MCF 10A (cell line): ENCODE measurements at regions of chr6 and their contacts with region 1.

Region 1: GRCh38 chr6:148192310-148192709 is 150.3 kb upstream of the SASH1 start:
- DNase-seq: peak; percentile 52
- H3K4me3 Mint-ChIP-seq: peak overlapping the region; percentile 60
- H3K27ac Mint-ChIP-seq: peak overlapping the region; percentile 92
- H3K4me1 Mint-ChIP-seq: peaks cover 34% of the 10 kb centered on the region
- H3K27me3 Mint-ChIP-seq: no peaks in the 10 kb centered on the region
- CTCF ChIP-seq: no peak

Region 2: DNA sequence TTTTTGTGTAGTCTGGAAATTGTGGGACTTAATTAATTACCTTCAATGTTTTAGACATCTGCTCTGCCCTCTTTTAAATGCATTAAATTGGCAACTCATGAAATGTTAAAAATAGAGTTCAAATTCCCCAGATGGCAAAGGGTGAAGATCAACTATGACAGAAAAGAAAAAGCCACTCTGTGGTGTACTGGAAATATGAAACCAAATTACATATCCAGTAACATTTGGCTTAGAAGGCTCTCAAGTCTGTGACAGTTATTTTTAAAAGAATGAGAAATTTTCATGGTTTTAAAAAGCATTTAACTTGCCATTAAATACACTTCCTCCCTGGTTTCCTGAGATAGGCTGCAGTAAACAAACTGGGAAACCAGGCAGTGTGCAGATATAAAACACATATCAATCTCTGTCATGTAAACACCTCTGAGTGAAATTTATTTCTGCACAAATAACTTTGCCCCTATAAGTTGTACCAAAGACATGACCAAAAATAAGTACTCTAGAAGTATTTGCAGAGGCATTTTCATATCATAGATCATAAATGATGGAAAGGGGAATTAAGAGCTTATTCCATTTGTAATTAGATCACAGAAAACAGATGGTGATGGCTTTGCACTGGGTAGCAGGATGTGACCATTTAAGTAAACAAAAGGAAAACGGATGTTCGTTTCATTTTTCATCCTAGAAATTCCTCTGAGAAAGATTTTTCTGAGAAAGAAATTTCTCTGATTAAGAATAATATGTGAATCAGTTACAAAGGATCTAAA is 323.7 kb before region 1 on chr6:
- CTCF ChIA-PET with region 1: no interaction called
- POLR2A ChIA-PET with region 1: no interaction called
- intact Hi-C with region 1: no loop called
- DNase-seq: no peak
- H3K4me3 Mint-ChIP-seq: no peak overlapping the region
- H3K27ac Mint-ChIP-seq: no peak overlapping the region
- H3K4me1 Mint-ChIP-seq: no peaks in the 10 kb centered on the region
- H3K27me3 Mint-ChIP-seq: no peaks in the 10 kb centered on the region
- CTCF ChIP-seq: no peak

Region 3: DNA sequence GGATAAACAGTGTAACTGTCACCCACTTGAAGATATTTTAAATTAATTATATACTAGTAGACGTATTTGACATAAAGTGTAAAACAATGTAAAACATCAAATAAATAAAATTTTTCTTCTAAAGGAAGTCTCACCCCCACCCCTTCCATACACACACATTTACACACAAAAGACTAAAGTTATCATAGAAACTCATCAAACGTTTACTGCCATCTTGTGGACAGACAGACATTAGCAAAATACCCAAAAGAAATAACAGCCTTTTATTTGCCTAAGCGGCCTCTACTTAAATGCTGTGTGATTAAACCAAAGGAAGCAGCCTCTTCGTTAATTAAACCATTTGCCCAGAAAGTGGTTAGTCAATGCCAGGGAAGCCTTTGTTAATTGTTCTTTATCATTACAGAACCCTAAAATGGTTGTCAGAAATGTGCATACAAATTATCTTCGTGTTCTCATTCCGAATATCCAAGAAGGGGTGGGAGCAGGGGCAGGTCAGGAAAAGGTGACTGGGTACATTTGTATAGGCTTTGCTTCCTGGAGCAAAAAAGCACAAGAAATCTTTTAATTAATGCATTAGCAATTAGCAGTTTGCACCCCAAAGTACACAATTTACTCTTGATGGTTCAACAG is 25.9 kb before region 1 on chr6:
- CTCF ChIA-PET with region 1: no interaction called
- POLR2A ChIA-PET with region 1: no interaction called
- intact Hi-C with region 1: no loop called
- DNase-seq: peak; percentile 71
- H3K4me3 Mint-ChIP-seq: no peak overlapping the region
- H3K27ac Mint-ChIP-seq: no peak overlapping the region
- H3K4me1 Mint-ChIP-seq: no peaks in the 10 kb centered on the region
- H3K27me3 Mint-ChIP-seq: no peaks in the 10 kb centered on the region
- CTCF ChIP-seq: peak; percentile 63

Region 4: DNA sequence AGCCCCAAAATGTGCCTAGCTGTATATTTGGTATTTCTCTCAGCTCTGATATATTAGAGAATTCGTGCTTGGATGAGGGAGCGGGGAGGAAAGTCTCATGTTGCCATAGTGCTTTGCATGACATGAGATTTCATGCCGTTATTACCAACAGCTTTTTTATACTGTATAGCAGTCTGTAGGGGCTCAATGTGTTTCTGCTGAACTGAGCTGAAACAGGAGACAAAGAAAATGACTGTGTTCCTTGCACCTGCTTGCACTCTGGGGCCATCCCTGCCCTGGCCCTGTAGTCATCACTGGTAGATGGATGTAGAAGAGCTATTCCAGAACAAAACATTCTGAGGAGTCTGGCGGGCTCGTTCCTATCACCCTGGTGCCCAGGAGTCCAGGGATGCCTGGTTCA is 22.4 kb after region 1 on chr6:
- CTCF ChIA-PET with region 1: no interaction called
- POLR2A ChIA-PET with region 1: interaction called, 11 read pairs
- intact Hi-C with region 1: no loop called
- DNase-seq: no peak
- H3K4me3 Mint-ChIP-seq: no peak overlapping the region
- H3K27ac Mint-ChIP-seq: no peak overlapping the region
- H3K4me1 Mint-ChIP-seq: no peaks in the 10 kb centered on the region
- H3K27me3 Mint-ChIP-seq: no peaks in the 10 kb centered on the region
- CTCF ChIP-seq: no peak

Region 5: DNA sequence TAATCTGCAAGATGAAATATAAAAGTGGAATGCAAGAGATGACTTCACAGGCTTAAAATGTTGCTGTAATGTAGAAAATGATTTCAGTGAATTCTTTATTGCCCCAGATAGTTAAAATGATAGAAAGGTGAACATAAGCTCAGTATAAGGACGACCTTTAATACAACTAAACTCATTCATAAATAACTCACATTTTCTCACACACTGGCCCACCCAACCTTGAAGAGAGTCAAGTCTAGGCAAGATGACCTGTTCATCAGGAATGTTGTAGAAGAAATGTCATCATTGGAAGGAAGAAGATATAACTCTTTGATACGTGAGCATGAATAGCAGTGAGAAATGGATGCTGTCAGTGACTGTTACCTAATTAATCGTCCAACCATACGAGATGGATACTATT is 39.3 kb after region 1 on chr6:
- CTCF ChIA-PET with region 1: no interaction called
- POLR2A ChIA-PET with region 1: interaction called, 101 read pairs
- intact Hi-C with region 1: no loop called
- DNase-seq: no peak
- H3K4me3 Mint-ChIP-seq: no peak overlapping the region
- H3K27ac Mint-ChIP-seq: peak overlapping the region; percentile 37
- H3K4me1 Mint-ChIP-seq: peaks cover 27% of the 10 kb centered on the region
- H3K27me3 Mint-ChIP-seq: no peaks in the 10 kb centered on the region
- CTCF ChIP-seq: no peak

Region 6: GRCh38 chr6:148250975-148251685 is 58.8 kb after region 1 on chr6:
- CTCF ChIA-PET with region 1: interaction called, 21 read pairs
- POLR2A ChIA-PET with region 1: interaction called, 28 read pairs
- intact Hi-C with region 1: no loop called
- DNase-seq: peak; percentile 66
- H3K4me3 Mint-ChIP-seq: no peak overlapping the region
- H3K27ac Mint-ChIP-seq: no peak overlapping the region
- H3K4me1 Mint-ChIP-seq: peaks cover 6% of the 10 kb centered on the region
- H3K27me3 Mint-ChIP-seq: no peaks in the 10 kb centered on the region
- CTCF ChIP-seq: peak; percentile 63

Region 7: DNA sequence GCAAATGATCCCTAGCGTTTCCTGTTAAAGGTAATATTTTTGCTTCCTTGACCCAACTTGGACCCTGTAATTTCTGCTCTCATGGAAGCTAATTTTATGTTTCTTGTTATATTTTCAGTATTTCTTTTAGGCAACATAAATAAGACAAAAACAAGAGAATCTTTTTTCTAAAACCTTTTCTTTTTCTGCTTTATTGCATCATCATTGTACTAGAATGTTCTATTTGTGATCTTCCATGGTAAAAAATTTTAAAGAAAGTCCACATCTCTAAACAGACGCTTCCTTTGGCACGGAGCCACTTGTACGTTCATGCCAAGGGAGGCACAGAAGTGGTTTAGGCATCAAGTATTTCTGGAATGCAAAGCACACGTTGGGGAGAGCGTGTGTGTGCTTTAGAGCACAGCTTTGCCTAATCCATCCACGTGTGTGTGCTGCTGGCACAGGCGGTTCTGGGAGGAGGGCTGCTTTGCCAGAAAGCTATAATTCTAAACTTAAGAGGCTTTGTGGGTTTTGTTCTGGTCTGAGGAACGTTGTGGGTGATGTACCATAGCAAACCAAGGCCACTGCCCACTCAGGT is 248.7 kb after region 1 on chr6:
- CTCF ChIA-PET with region 1: no interaction called
- POLR2A ChIA-PET with region 1: interaction called, 12 read pairs
- intact Hi-C with region 1: no loop called
- DNase-seq: peak; percentile 95
- H3K4me3 Mint-ChIP-seq: peak overlapping the region; percentile 44
- H3K27ac Mint-ChIP-seq: peak overlapping the region; percentile 95
- H3K4me1 Mint-ChIP-seq: peaks cover 28% of the 10 kb centered on the region
- H3K27me3 Mint-ChIP-seq: no peaks in the 10 kb centered on the region
- CTCF ChIP-seq: no peak

Region 8: GRCh38 chr6:148578245-148578732 is 386.0 kb after region 1 on chr6:
- CTCF ChIA-PET with region 1: no interaction called
- POLR2A ChIA-PET with region 1: no interaction called
- intact Hi-C with region 1: no loop called
- DNase-seq: peak; percentile 79
- H3K4me3 Mint-ChIP-seq: no peak overlapping the region
- H3K27ac Mint-ChIP-seq: no peak overlapping the region
- H3K4me1 Mint-ChIP-seq: no peaks in the 10 kb centered on the region
- H3K27me3 Mint-ChIP-seq: no peaks in the 10 kb centered on the region
- CTCF ChIP-seq: peak; percentile 83